ENCODE measurements at regions of chr20 and their contacts with region 1.

Region 1: GRCh38 chr20:10553326-10553984 is 118.3 kb downstream of the SLX4IP start:
- DNase-seq: peak; percentile 54 to 85
- ATAC-seq: peak; percentile 70 to 84; a peak in 5 of 6 replicates
- H3K4me3 ChIP-seq: no peak overlapping the region
- H3K27ac ChIP-seq: peak overlapping the region; percentile 37 to 46; a peak in 4 of 6 replicates
- H3K4me1 ChIP-seq: peaks cover 55% of the 10 kb centered on the region
- CTCF ChIP-seq: peak; percentile 97
- EP300 ChIP-seq: no peak
- POLR2A ChIP-seq: no peak
- RAD21 ChIP-seq: peak; percentile 98 to 99

Region 2: DNA sequence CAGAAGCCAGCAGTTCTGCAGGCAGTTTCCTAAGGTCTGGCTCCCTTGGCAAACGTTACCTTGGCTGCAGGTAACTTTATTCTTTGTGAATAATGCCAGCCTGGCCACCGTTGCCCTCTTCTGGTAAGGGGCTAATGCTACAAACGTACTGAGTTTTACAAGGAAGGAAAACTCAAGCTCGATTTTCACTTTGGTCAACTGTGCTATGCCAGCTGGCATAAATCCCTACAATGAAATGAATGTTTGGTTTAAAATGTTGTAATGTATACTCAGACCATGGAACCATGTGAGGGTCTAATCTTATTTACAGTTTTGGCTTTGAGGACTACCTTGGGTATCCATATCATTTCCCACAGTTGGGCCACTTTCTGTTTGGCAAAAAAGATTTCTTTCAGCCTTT is 16.9 kb before region 1 on chr20:
- CTCF ChIA-PET with region 1: interaction called, 15 read pairs
- POLR2A ChIA-PET with region 1: no interaction called
- DNase-seq: peak in 1 of 2 experiments; percentile 52
- ATAC-seq: peak in 1 of 2 experiments; percentile 37; a peak in 2 of 6 replicates
- H3K4me3 ChIP-seq: no peak overlapping the region
- H3K27ac ChIP-seq: peak overlapping the region; percentile 59 to 92
- H3K4me1 ChIP-seq: peaks cover 54% of the 10 kb centered on the region
- CTCF ChIP-seq: peak; percentile 68
- EP300 ChIP-seq: no peak
- POLR2A ChIP-seq: no peak
- RAD21 ChIP-seq: peak; percentile 76 to 83

Region 3: DNA sequence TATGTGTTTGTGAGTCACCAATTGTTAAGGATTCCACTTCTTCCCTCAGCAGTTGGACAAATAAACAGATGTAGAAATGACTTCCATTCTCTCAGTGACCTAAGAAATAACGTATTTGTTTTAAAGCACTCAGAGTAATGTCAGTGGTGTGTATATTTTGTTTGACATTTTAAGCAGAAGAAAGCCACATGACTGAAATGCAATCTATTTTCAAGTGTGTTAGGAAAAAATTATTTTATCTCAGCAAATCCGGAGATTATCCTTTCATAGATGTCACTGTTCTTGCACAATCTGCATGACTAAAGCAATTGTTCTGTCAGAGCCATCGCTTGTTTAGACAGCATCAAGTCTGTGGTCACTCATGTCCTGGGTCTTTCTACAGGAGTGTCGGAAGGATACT is 43.3 kb after region 1 on chr20:
- CTCF ChIA-PET with region 1: interaction called, 10 read pairs
- POLR2A ChIA-PET with region 1: interaction called, 4 read pairs
- DNase-seq: peak; percentile 56 to 76
- ATAC-seq: peak; percentile 31 to 65; a peak in 4 of 6 replicates
- H3K4me3 ChIP-seq: no peak overlapping the region
- H3K27ac ChIP-seq: peak overlapping the region; percentile 72 to 86
- H3K4me1 ChIP-seq: peaks cover 73% of the 10 kb centered on the region
- CTCF ChIP-seq: no peak
- EP300 ChIP-seq: no peak; a peak in 2 of 5 replicates
- POLR2A ChIP-seq: no peak
- RAD21 ChIP-seq: no peak

Region 4: GRCh38 chr20:10636326-10636818 is 82.9 kb after region 1 on chr20:
- CTCF ChIA-PET with region 1: interaction called, 16 read pairs
- POLR2A ChIA-PET with region 1: interaction called, 4 read pairs
- DNase-seq: no peak
- ATAC-seq: peak; percentile 4 to 7; a peak in 2 of 6 replicates
- H3K4me3 ChIP-seq: no peak overlapping the region
- H3K27ac ChIP-seq: peak overlapping the region in 1 of 2 experiments; percentile 18; a peak in 3 of 6 replicates
- H3K4me1 ChIP-seq: peaks cover 52% of the 10 kb centered on the region
- CTCF ChIP-seq: no peak
- EP300 ChIP-seq: no peak
- POLR2A ChIP-seq: no peak
- RAD21 ChIP-seq: peak in 1 of 2 experiments; percentile 22; a peak in 1 of 5 replicates

Region 5: DNA sequence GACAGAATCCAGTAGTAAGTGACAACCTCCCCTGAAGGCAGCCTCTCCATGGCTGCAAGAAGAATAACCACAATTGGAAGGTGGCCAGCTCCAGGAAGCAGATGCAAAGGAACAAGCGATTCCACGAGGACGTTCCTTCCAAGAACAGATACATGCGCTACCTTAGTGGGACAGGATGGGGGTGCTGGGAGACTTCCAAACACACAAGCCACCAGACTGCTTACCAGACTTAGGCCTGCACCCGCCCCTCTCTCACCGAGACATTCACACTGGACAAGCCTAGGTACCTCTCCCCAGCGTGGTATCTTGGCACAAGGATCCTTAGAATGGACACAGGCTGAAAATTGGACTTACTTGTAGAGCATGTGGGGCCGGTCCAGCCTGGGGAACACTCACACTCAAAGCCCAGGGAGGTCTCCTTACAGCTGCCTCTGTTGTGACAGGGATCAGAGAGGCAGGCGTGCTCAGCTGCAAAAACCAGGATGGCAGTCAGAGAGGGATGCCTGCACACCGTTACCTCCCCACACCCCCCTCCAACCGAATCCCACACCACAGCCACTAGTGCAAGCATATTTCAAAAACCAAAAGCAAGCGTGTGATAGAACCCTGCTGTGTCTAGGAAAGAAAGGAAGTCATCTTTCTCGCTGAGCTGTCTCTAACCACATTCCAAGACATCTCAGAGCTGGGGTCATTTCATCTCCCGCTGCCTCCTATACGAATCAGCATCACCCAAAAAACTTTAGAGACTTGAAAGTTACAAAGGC is 98.0 kb after region 1 on chr20:
- CTCF ChIA-PET with region 1: interaction called, 11 read pairs
- POLR2A ChIA-PET with region 1: no interaction called
- DNase-seq: no peak
- ATAC-seq: peak in 1 of 2 experiments; percentile 19; a peak in 3 of 6 replicates
- H3K4me3 ChIP-seq: no peak overlapping the region
- H3K27ac ChIP-seq: 0 out of 6 replicates have a peak overlapping the region, but pooled peaks of 1 of the 2 experiments have one; percentile 2
- H3K4me1 ChIP-seq: peaks cover 26% of the 10 kb centered on the region; the same call in 2 of the 3 replicates
- CTCF ChIP-seq: no peak
- EP300 ChIP-seq: no peak
- POLR2A ChIP-seq: no peak
- RAD21 ChIP-seq: peak in 1 of 2 experiments; percentile 14; a peak in 1 of 5 replicates

Region 6: GRCh38 chr20:10832141-10832540 is 278.7 kb after region 1 on chr20:
- CTCF ChIA-PET with region 1: no interaction called
- POLR2A ChIA-PET with region 1: no interaction called
- DNase-seq: no peak
- ATAC-seq: no peak
- H3K4me3 ChIP-seq: no peak overlapping the region
- H3K27ac ChIP-seq: no peak overlapping the region
- H3K4me1 ChIP-seq: no peaks in the 10 kb centered on the region
- CTCF ChIP-seq: no peak
- EP300 ChIP-seq: no peak
- POLR2A ChIP-seq: no peak
- RAD21 ChIP-seq: no peak

Measured in A549 (cell line).